ENCODE measurements at regions of chr5 and their contacts with region 1.

Region 1: GRCh38 chr5:138449501-138450239 is 10.8 kb downstream of the REEP2 start:
- DNase-seq: no peak
- ATAC-seq: peak; percentile 96
- H3K4me3 ChIP-seq: peak overlapping the region in 1 of 2 experiments; percentile 24; a peak in 1 of 4 replicates
- H3K27ac ChIP-seq: no peak overlapping the region
- H3K4me1 ChIP-seq: peaks cover 3% of the 10 kb centered on the region; the same call in 1 of the 2 replicates
- H3K27me3 ChIP-seq: no peaks in the 10 kb centered on the region
- CTCF ChIP-seq: peak; percentile 97

Region 2: GRCh38 chr5:138515556-138516245 is 66.0 kb after region 1 on chr5:
- CTCF ChIA-PET with region 1: no interaction called
- POLR2A ChIA-PET with region 1: interaction called, 12 read pairs
- in situ Hi-C with region 1: no loop called
- intact Hi-C with region 1: no loop called
- DNase-seq: no peak
- ATAC-seq: no peak
- H3K4me3 ChIP-seq: no peak overlapping the region
- H3K27ac ChIP-seq: no peak overlapping the region
- H3K4me1 ChIP-seq: no peaks in the 10 kb centered on the region
- H3K27me3 ChIP-seq: no peaks in the 10 kb centered on the region
- CTCF ChIP-seq: no peak